Activated CD8-positive, alpha-beta T cell treated with anti-CD3 and anti-CD28 coated beads, Interleukin-2, amount 10 ng/mL, durations not matched to agents 7 days and 5 days (primary cell): ENCODE measurements at regions of chr7 and their contacts with region 1.

Region 1: DNA sequence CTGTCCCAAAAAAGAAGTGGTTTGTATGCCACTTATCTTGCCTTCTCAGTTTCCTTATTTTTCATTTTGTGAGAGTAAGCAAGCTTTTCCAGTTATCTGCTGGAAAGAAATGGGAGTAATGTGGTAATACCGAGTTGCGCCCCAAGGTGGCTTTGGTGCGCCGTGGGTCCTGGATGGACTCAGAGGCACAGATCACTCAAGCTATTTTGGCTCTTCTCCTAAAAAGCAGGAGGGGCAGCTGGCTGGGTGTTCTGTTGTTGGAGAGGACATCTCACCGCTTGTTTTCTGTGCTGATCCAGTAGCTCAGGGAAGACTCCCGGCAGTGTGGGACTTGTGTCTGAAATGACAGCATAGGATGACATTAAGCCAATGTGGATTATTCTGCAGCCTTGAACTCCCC is 16.4 kb downstream of the PRKRIP1 start:
- DNase-seq: peak; percentile 63
- ATAC-seq: no peak
- H3K4me3 Mint-ChIP-seq: no peak overlapping the region
- H3K27ac Mint-ChIP-seq: no peak overlapping the region
- H3K4me1 Mint-ChIP-seq: peaks cover 52% of the 10 kb centered on the region
- H3K27me3 Mint-ChIP-seq: no peaks in the 10 kb centered on the region

Region 2: GRCh38 chr7:102425639-102426267 is 13.2 kb after region 1 on chr7:
- CTCF ChIA-PET with region 1: interaction called, 49 read pairs
- POLR2A ChIA-PET with region 1: interaction called, 124 read pairs
- DNase-seq: peak; percentile 89
- ATAC-seq: peak; percentile 84
- H3K4me3 Mint-ChIP-seq: peak overlapping the region; percentile 79
- H3K27ac Mint-ChIP-seq: peak overlapping the region; percentile 99
- H3K4me1 Mint-ChIP-seq: peaks cover 79% of the 10 kb centered on the region
- H3K27me3 Mint-ChIP-seq: no peaks in the 10 kb centered on the region

Region 3: DNA sequence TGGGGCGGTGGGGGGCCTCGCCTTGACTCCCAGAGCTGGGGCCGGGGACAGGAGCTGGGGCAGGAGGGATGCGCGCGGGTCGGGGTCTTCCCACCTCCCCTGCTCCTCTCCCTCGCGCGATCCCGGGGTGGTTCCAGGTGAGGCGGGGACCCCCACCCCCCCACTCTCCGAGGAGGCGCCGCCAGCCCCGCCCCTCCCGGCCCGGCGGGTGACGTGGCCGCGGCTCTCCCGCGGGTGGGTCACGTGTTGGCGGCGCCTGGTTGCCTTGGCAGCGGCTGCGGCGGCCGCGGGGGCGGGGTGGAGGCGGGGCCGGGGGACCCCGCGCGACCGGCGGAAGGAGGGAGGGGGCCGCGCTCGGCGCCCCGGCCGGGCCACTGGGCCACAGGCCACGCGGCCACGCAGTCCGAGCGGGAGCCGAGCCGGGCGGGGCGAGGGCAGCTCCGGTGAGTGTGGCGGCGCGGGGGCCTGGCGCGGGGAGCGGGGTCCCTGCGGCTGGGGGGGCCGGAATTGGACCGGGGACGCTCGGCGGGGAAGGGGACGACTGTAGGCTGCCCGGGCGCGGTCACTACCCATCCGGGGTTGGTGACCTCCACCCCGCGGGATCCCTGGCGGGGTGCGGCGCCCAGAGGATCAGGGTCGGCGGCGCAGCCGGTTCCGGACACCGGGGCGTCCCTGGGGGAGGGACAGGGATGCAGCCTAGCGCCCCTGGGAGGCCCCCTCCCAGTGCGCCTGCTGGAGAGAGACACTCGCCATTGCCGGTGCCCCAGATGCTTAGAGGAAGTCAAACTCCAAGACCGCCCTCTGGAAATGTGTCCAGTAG is 20.9 kb after region 1 on chr7 and contains the start of gene ORAI2:
- CTCF ChIA-PET with region 1: interaction called, 49 read pairs
- POLR2A ChIA-PET with region 1: interaction called, 6 read pairs
- DNase-seq: peak; percentile 88
- ATAC-seq: peak; percentile 71
- H3K4me3 Mint-ChIP-seq: peak within 1 kb of the TSS; percentile 88
- H3K27ac Mint-ChIP-seq: peak within 1 kb of the TSS; percentile 87
- H3K4me1 Mint-ChIP-seq: peaks cover 68% of the 10 kb centered on the region
- H3K27me3 Mint-ChIP-seq: no peaks in the 10 kb centered on the region
- total RNA-seq, gene ORAI2: 72.5 to 72.8 TPM

Region 4: GRCh38 chr7:102440078-102440795 is 27.7 kb after region 1 on chr7:
- CTCF ChIA-PET with region 1: interaction called, 43 read pairs
- POLR2A ChIA-PET with region 1: interaction called, 3 read pairs
- DNase-seq: no peak
- ATAC-seq: no peak
- H3K4me3 Mint-ChIP-seq: no peak overlapping the region
- H3K27ac Mint-ChIP-seq: no peak overlapping the region
- H3K4me1 Mint-ChIP-seq: peaks cover 33% of the 10 kb centered on the region
- H3K27me3 Mint-ChIP-seq: no peaks in the 10 kb centered on the region

Region 5: DNA sequence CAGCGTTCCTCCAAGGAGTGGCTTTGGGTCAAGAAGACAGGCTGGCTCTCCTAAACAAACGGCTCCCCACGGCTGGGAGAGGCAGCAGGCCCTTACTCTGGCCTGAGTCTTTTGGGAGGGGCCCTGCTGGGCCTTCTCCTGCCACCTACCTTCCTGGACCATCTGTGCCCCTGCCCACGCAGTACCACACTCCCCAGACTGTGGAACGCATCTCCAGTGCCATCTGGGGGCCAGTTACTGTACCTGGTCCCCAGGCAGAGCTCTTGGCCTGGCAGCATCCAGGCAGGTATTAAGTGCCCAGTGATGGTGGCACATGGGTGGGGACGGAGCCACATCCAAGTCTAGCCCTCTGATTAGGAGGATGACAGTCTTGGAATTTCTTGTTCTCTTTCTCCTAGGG is 37.7 kb after region 1 on chr7:
- CTCF ChIA-PET with region 1: interaction called, 44 read pairs
- POLR2A ChIA-PET with region 1: interaction called, 3 read pairs
- DNase-seq: peak; percentile 52
- ATAC-seq: peak; percentile 52
- H3K4me3 Mint-ChIP-seq: no peak overlapping the region
- H3K27ac Mint-ChIP-seq: no peak overlapping the region
- H3K4me1 Mint-ChIP-seq: no peaks in the 10 kb centered on the region
- H3K27me3 Mint-ChIP-seq: no peaks in the 10 kb centered on the region

Region 6: DNA sequence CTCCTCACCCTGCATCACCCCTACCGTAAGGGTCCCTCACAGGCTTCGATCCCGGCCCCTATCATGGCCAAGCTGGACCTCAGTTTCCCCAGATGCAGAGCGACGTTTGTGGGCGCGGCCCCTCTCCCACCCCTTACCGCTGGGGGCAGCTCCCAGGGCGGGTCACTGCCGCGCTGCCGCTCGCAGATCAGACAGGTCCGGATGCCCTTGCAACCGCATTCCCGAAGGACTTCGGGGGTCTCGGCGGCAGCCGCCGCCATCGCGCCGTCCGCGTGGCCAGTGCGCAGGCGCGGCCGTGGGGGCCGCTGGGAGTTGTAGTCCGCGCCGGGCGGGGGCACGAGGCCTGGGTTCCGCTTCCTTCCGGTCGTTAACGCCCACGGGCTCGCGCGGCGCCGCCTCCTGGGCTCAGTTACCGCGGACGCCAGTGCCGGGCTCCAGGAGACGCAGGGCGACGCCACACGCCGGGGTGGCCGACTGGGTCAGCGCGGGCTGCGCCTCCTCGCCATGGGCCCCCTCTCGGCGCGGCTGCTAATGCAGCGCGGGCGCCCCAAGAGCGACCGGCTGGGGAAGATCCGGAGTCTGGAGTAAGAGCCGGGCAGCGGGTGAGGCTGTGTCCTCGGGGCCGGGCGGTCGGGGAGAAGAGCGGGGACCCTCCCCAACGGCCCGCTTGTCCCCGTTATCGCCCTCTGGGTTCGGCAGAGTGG is 52.2 kb after region 1 on chr7 and contains the starts of genes ALKBH4 and LRWD1:
- CTCF ChIA-PET with region 1: interaction called, 18 read pairs
- POLR2A ChIA-PET with region 1: interaction called, 4 read pairs
- DNase-seq: peak; percentile 94
- ATAC-seq: peak; percentile 94
- H3K4me3 Mint-ChIP-seq: peak within 1 kb of the TSS; percentile 95
- H3K27ac Mint-ChIP-seq: peak within 1 kb of the TSS; percentile 87
- H3K4me1 Mint-ChIP-seq: peaks cover 26% of the 10 kb centered on the region
- H3K27me3 Mint-ChIP-seq: no peaks in the 10 kb centered on the region
- total RNA-seq, gene ALKBH4: 10.8 to 11.1 TPM
- total RNA-seq, gene LRWD1: 16.7 to 21.7 TPM